ENCODE measurements at regions of chr19 and their contacts with region 1.

Region 1: GRCh38 chr19:12965017-12965811 is 4.2 kb upstream of the DAND5 start:
- DNase-seq: peak; percentile 88
- ATAC-seq: peak; percentile 98
- H3K4me3 Mint-ChIP-seq: peak overlapping the region; percentile 74
- H3K27ac Mint-ChIP-seq: peak overlapping the region; percentile 86
- H3K4me1 Mint-ChIP-seq: peaks cover 8% of the 10 kb centered on the region
- H3K27me3 Mint-ChIP-seq: peaks cover 3% of the 10 kb centered on the region

Region 2: DNA sequence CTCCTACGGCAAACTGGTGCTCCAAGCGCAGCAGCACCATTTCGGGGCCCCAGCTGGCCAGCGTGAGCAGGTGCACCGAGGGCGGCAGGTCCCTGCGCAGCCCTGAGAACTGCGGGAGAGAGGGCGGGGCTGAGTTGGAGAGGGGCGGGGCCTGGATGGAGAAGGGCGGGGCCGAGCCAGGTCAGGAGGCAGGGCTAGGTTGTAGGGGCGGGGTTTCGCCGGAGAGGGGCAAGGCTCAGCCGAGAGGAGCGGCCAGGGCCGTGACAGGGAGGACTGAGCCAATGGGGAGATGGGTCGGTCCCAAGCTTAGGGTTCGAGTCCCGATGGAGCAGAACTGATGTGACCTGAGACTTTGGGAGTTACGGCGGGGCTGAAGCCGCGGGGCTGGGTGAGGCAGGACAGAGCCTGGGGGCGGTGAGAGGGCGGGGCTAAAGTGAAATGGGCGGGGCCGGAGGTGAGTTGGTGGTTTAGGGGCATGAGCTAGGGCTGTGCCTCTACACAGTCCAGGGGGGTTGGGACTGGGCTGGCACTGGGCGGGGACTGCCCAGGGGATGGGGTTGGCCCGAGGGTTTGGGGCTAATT is 317.6 kb before region 1 on chr19:
- CTCF ChIA-PET with region 1: no interaction called
- DNase-seq: no peak
- ATAC-seq: peak; percentile 71
- H3K4me3 Mint-ChIP-seq: no peak overlapping the region
- H3K27ac Mint-ChIP-seq: no peak overlapping the region
- H3K4me1 Mint-ChIP-seq: peaks cover 2% of the 10 kb centered on the region
- H3K27me3 Mint-ChIP-seq: no peaks in the 10 kb centered on the region

Region 3: GRCh38 chr19:12722566-12723380 is 242.4 kb before region 1 on chr19:
- CTCF ChIA-PET with region 1: no interaction called
- DNase-seq: peak; percentile 98
- ATAC-seq: peak; percentile 88
- H3K4me3 Mint-ChIP-seq: peak overlapping the region; percentile 83
- H3K27ac Mint-ChIP-seq: peak overlapping the region; percentile 91
- H3K4me1 Mint-ChIP-seq: peaks cover 38% of the 10 kb centered on the region
- H3K27me3 Mint-ChIP-seq: no peaks in the 10 kb centered on the region

Region 4: GRCh38 chr19:12872941-12873890 is 92.0 kb before region 1 on chr19:
- CTCF ChIA-PET with region 1: interaction called, 10 read pairs
- DNase-seq: peak; percentile 86
- ATAC-seq: peak; percentile 76
- H3K4me3 Mint-ChIP-seq: peak overlapping the region; percentile 43
- H3K27ac Mint-ChIP-seq: no peak overlapping the region
- H3K4me1 Mint-ChIP-seq: peaks cover 6% of the 10 kb centered on the region
- H3K27me3 Mint-ChIP-seq: no peaks in the 10 kb centered on the region

Region 5: GRCh38 chr19:12899891-12900518 is 65.2 kb before region 1 on chr19:
- CTCF ChIA-PET with region 1: interaction called, 20 read pairs
- DNase-seq: peak; percentile 82
- ATAC-seq: peak; percentile 85
- H3K4me3 Mint-ChIP-seq: peak overlapping the region; percentile 56
- H3K27ac Mint-ChIP-seq: peak overlapping the region; percentile 88
- H3K4me1 Mint-ChIP-seq: peaks cover 26% of the 10 kb centered on the region
- H3K27me3 Mint-ChIP-seq: no peaks in the 10 kb centered on the region

Region 6: DNA sequence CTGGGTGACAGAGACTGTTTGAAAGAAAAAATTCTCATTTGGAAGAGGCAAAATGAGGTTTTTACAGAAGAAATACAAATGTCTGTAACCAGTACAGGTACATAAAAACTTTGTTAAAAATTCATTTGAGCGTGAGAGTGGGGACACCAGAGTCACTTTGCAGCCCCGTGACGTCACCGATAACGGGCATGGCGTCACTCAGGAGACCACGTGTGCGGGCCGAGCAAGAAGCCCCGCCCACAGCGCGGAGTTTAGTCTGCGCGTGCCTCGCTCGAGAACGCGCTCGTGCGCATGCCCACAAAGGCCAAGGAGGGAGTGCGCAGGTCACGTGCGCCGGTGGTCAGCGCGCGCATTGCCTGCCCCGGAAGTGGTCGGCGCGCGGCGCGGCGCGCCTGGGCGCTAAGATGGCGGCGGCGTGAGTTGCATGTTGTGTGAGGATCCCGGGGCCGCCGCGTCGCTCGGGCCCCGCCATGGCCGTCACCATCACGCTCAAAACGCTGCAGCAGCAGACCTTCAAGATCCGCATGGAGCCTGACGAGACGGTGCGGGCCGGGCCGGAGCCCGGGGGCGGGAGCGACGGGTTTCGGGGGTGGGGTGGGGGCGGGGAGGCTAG is 19.6 kb before region 1 on chr19 and contains the start of gene RAD23A:
- CTCF ChIA-PET with region 1: interaction called, 15 read pairs
- DNase-seq: peak; percentile 99
- ATAC-seq: peak; percentile 83
- H3K4me3 Mint-ChIP-seq: peak within 1 kb of the TSS; percentile 85
- H3K27ac Mint-ChIP-seq: peak within 1 kb of the TSS; percentile 97
- H3K4me1 Mint-ChIP-seq: peaks cover 67% of the 10 kb centered on the region
- H3K27me3 Mint-ChIP-seq: no peaks in the 10 kb centered on the region
- total RNA-seq, gene RAD23A: 164 to 168 TPM

Region 7: DNA sequence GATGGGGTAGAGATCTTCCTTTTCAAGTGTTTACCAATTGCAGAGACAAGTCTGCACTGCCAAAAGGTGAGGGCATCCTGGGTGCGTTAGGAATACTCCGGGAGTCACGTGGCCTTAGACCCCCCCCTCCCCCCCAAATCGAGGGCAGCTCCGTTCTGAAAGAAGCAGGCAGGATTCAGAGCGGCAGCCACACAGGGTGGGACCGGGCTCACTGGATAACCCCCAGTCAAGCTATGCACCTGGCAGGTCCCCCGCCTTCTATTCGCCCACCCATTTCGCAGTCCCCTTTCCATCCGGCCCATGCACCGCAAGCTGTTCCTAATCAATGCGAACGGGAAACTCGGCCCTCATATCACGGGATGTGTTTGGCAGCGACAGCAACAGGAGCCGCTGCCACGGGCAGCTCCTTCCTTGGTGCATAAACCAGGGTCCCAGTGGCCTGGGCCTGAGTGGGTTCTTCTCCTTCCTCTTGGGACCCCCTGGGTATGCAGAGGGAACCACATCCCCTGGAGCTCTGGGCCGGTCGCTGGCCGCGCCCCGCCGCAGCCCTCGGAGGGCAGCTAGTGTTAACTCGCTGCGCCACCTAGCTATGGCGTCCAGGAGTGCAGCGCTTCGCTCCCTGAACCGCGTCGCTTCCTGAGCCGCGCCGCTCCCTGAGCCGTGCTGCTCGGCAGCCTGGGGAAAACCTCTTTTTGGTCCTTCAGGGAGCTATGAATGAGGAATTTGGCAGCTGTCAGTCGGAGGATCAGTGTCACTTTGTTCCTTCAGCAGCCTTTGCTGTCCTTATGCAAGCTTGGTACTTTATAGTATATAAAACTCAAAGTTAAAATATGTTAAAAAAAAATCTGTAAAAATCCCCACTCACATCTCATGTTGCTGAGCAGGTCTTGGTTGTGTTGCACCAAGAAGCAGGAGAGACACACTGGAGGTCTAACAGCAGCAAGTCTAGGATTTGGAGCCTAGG is 96.0 kb after region 1 on chr19:
- CTCF ChIA-PET with region 1: interaction called, 98 read pairs
- DNase-seq: peak; percentile 83
- ATAC-seq: peak; percentile 96
- H3K4me3 Mint-ChIP-seq: peak overlapping the region; percentile 58
- H3K27ac Mint-ChIP-seq: no peak overlapping the region
- H3K4me1 Mint-ChIP-seq: peaks cover 8% of the 10 kb centered on the region
- H3K27me3 Mint-ChIP-seq: peaks cover 32% of the 10 kb centered on the region

Region 8: GRCh38 chr19:13117772-13118423 is 152.7 kb after region 1 on chr19 and contains the start of gene NACC1:
- CTCF ChIA-PET with region 1: interaction called, 15 read pairs
- DNase-seq: peak; percentile 93
- ATAC-seq: peak; percentile 88
- H3K4me3 Mint-ChIP-seq: peak within 1 kb of the TSS; percentile 93
- H3K27ac Mint-ChIP-seq: peak within 1 kb of the TSS; percentile 96
- H3K4me1 Mint-ChIP-seq: peaks cover 56% of the 10 kb centered on the region
- H3K27me3 Mint-ChIP-seq: no peaks in the 10 kb centered on the region
- total RNA-seq, gene NACC1: 82.2 to 96.0 TPM

Region 9: GRCh38 chr19:13181747-13182388 is 216.7 kb after region 1 on chr19:
- CTCF ChIA-PET with region 1: no interaction called
- DNase-seq: peak; percentile 55
- ATAC-seq: peak; percentile 39
- H3K4me3 Mint-ChIP-seq: no peak overlapping the region
- H3K27ac Mint-ChIP-seq: peak overlapping the region; percentile 76
- H3K4me1 Mint-ChIP-seq: peaks cover 20% of the 10 kb centered on the region
- H3K27me3 Mint-ChIP-seq: no peaks in the 10 kb centered on the region